ENCODE measurements at regions of chr18 and their contacts with region 1.

Region 1: GRCh38 chr18:864872-865273 is 39.8 kb upstream of the ADCYAP1 start:
- DNase-seq: no peak
- H3K4me3 ChIP-seq: no peak overlapping the region
- H3K27ac ChIP-seq: no peak overlapping the region
- H3K4me1 ChIP-seq: no peaks in the 10 kb centered on the region
- H3K27me3 ChIP-seq: no peaks in the 10 kb centered on the region
- CTCF ChIP-seq: peak; percentile 61 to 90 (median 76)
- POLR2A ChIP-seq: no peak

Region 2: GRCh38 chr18:923141-923866 is 58.4 kb after region 1 on chr18:
- intact Hi-C with region 1: no loop called
- DNase-seq: no peak
- H3K4me3 ChIP-seq: no peak overlapping the region
- H3K27ac ChIP-seq: no peak overlapping the region
- H3K4me1 ChIP-seq: no peaks in the 10 kb centered on the region
- H3K27me3 ChIP-seq: no peaks in the 10 kb centered on the region
- CTCF ChIP-seq: no peak
- POLR2A ChIP-seq: no peak

Region 3: DNA sequence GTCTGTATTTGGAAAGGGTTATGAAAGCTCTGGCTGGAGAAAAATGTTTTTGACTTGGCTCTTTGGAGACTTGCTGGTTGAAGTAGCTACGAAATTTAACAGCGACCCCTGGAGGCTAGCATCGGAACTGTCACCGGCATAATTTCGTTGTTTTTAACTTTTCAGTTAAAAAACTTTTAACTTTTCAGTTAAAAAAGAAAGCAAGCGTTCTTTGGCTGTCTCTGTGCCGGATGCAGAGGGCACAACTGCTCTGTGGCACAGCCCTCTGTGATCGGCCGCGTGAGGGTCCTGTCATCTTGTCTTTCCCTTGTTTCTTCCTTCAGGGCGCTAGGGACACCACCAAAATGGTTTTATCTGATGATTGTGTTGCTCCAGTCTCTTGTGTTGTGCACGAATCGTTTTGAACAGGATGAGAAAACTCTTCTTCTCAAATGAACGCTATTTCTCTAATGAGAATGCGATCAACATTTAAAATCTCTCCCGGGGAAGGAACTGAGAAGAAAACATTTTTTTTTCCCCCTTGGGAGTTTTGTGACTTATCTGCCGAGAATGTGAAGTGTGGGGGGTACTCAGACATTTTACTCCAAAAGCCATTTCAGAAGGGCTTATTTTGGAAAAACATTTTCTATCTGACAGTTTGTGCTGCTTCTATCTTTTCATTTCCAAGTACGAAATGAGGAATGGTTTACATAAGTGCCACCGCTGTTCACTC is 96.9 kb after region 1 on chr18:
- intact Hi-C with region 1: loop called (anchors 5 kb)
- DNase-seq: no peak
- H3K4me3 ChIP-seq: peak overlapping the region; percentile 31 to 45
- H3K27ac ChIP-seq: no peak overlapping the region
- H3K4me1 ChIP-seq: no peaks in the 10 kb centered on the region
- H3K27me3 ChIP-seq: no peaks in the 10 kb centered on the region
- CTCF ChIP-seq: peak; percentile 72 to 73 (median 73)
- POLR2A ChIP-seq: no peak